Dendritic cell treated with granulocyte-macrophage colony-stimulating factor and Interleukin-4, amounts not matched to agents 40 ng/mL and 50 ng/mL, for 4 days (primary cell): ENCODE measurements at regions of chr4 and their contacts with region 1.

Region 1: GRCh38 chr4:101730291-101731117 is 60.0 kb upstream of the BANK1 start:
- H3K4me3 Mint-ChIP-seq: no peak overlapping the region
- H3K27ac Mint-ChIP-seq: no peak overlapping the region
- H3K4me1 Mint-ChIP-seq: no peaks in the 10 kb centered on the region
- H3K27me3 Mint-ChIP-seq: no peaks in the 10 kb centered on the region

Region 2: DNA sequence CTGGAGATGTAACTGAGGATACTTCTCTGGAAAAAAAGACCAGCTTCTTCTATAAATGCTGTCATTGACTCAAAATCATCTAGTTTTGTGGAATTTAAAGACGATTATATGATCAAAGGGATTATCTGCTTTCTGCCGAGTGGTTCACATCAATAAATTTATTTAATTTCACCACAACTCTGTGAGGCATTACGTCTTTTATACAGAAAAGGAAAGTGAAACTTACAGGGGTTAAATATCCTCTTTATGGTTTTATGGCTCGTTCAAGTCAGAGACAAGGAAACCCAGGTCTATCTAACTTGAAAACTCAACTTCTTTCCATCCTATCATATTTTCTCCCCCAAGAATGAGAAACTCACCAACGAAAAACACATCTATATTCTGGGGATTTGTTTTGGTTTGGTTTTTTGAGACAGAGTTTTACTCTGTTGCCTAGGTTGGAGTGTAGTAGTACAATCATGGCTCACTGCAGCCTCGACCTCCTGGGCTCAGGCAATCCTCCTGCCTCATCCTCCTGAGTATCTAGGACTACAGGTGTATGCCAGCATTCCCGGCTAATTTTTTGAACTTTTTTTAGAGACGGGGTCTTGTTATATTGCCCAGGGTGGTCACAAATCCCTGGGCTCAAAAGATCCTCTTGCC is 834.8 kb before region 1 on chr4:
- intact Hi-C with region 1: loop called (anchors 10 kb)
- H3K4me3 Mint-ChIP-seq: peak overlapping the region; percentile 60
- H3K27ac Mint-ChIP-seq: peak overlapping the region; percentile 60
- H3K4me1 Mint-ChIP-seq: peaks cover 5% of the 10 kb centered on the region
- H3K27me3 Mint-ChIP-seq: no peaks in the 10 kb centered on the region

Region 3: GRCh38 chr4:101169044-101170014 is 561.2 kb before region 1 on chr4:
- intact Hi-C with region 1: loop called (anchors 1 kb)
- H3K4me3 Mint-ChIP-seq: no peak overlapping the region
- H3K27ac Mint-ChIP-seq: no peak overlapping the region
- H3K4me1 Mint-ChIP-seq: peaks cover 11% of the 10 kb centered on the region
- H3K27me3 Mint-ChIP-seq: no peaks in the 10 kb centered on the region